Colonic mucosa (tissue), 4 donors: ENCODE measurements at regions of chr14 and their contacts with region 1.

Region 1: DNA sequence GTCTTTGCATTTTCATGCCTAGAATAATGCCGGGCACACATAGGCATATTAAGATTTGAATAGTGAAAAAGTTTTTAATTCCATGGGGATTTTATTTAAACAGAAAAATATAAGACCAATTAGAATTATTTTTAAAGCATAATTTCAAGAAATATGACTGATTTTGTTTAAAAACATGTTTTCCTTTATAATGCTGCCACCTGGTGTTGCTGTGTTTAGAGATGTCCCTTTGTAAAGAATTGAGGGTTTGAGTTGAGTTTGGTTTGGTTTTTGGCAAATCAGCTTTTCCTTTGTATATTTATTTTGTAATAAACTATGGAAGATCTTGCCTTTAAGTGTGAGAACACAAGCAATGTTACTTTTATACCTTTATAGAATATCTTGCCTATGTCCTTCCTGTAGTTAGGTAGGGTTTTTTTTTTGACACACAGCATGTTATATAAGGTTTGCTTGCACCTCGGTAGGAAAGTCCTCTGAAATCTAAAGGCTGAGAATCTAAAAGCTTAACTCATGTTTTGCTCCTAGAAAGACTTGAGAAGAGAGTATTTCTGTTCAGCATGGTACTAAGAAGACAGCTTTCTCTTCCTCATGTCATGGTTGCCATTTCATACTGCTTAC is 31.4 kb upstream of the SNAPC1 start:
- DNase-seq: no peak
- H3K4me3 ChIP-seq: no peak overlapping the region
- H3K27ac ChIP-seq: no peak overlapping the region
- H3K4me1 ChIP-seq: peaks cover 6% of the 10 kb centered on the region
- H3K27me3 ChIP-seq: no peaks in the 10 kb centered on the region
- CTCF ChIP-seq: peak; percentile 36

Region 2: DNA sequence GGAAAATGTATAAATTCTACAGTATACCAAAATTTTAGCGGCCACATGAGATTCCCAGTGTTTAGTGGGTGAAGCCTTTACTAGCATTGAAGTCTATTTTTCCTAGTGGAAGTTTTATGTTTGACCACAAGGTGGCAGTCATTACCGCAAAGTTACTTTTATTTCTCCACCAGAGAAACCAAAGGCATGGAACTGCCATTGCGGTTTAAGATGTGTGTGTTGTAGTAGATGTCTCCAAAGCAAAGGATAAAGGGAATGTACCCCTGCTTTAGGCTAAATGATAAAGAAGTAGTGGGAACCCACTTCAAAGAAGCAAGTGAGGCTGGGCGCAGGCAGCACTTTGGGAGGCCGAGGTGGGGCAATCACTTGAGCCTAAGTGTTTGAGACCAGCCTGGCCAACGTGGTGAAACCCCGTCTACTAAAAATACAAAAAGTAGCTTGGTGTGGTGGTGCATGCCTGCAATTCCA is 269.0 kb before region 1 on chr14:
- intact Hi-C with region 1: loop called (anchors 5 kb)
- DNase-seq: peak; percentile 59
- H3K4me3 ChIP-seq: no peak overlapping the region
- H3K27ac ChIP-seq: no peak overlapping the region
- H3K4me1 ChIP-seq: peaks cover 10% of the 10 kb centered on the region
- H3K27me3 ChIP-seq: no peaks in the 10 kb centered on the region
- CTCF ChIP-seq: peak; percentile 77

Region 3: DNA sequence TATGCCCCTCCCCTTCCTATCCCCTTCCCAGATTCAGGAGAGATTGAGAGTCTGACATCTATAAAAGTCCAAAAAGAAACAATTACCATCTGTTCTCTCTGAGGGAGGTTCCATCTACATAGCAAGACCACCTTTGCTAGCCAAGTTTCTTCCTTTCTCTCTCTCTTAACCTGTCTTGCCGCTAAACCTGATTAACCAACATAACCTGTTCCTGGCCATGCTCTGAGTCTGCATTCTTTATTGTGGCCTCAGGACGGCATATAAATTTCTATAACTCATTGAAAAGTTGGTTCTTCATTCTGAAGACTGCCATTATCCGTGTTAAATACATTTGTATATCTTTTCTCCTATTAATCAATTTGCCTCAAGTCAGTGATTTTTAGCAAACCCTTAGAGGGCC is 720.4 kb after region 1 on chr14:
- intact Hi-C with region 1: no loop called
- DNase-seq: no peak
- H3K4me3 ChIP-seq: no peak overlapping the region
- H3K27ac ChIP-seq: no peak overlapping the region
- H3K4me1 ChIP-seq: no peaks in the 10 kb centered on the region
- H3K27me3 ChIP-seq: no peaks in the 10 kb centered on the region
- CTCF ChIP-seq: no peak